Calu3 (cell line): ENCODE measurements at regions of chr10 and their contacts with region 1.

Region 1: DNA sequence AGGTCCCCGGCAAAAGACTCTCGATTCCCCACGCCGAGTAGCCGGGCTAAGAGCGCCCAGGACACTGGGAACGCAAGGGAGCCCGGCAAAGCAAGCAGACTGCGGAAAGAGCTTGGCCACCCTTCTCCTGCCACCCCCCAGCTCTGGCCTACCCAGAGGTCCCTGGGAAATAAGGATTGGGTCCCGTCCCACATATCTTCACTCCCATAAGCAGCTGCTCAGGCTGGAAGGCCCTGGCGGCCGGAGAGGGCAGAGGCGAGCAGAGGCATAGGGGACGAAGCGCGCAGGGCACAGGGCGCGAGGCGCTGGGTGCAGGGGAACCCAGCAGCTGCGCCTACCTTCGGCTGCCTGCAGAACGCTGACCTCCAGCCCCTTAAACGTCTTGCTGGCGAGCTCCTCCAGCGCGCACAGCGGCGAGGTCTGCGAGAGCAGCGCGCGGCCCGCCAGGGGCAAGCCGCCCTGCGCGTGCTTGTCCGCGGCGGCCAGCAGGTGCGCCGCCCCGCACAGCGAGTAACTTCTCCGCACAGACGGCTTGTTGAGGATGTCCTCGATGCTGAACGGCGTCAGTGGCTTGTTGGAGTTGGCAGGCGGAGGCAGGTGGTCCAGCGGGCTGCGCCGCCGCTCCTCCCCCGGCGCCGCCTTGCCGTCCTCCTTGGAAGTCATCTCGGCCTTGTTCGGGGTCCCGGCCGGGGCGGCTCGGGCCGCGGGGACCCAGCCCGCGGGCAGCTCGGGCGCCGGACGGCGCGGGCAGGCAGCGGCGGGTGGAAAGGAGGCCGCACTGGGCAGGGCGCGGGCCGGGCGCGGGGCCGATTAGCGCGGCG is 900 bp downstream of the LBX1 start:
- DNase-seq: no peak
- H3K4me3 Mint-ChIP-seq: peak overlapping the region; percentile 3
- H3K27ac Mint-ChIP-seq: no peak overlapping the region
- H3K4me1 Mint-ChIP-seq: peaks cover 9% of the 10 kb centered on the region
- H3K27me3 Mint-ChIP-seq: peaks cover 99% of the 10 kb centered on the region
- CTCF ChIP-seq: no peak

Region 2: DNA sequence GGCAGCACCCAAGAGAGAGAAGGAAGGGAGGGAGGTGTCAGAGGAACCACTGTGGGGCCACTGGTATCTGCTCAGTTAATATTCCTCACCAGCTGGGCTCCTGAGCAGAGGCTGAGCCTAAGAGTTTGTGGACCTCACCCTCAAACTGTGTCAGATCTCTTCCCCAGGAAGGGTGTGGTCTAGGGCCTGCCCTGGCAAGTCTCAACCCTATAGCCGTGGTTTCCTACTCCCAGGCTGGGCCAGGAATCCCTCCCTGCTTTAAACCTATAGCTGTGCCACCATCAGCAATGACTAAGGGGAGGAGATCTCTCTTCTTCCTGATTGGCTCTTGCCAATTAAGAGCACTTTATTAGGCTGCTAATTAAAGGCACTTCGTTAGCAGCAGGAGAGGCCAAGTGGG is 329.8 kb after region 1 on chr10:
- CTCF ChIA-PET with region 1: no interaction called
- intact Hi-C with region 1: loop called (anchors 5 kb)
- DNase-seq: no peak
- H3K4me3 Mint-ChIP-seq: no peak overlapping the region
- H3K27ac Mint-ChIP-seq: no peak overlapping the region
- H3K4me1 Mint-ChIP-seq: no peaks in the 10 kb centered on the region
- H3K27me3 Mint-ChIP-seq: no peaks in the 10 kb centered on the region
- CTCF ChIP-seq: no peak